ENCODE measurements at regions of chr1 and their contacts with region 1.

Region 1: GRCh38 chr1:44390277-44390676 is 14.8 kb upstream of the RNF220 start:
- DNase-seq: peak; percentile 30 to 57
- ATAC-seq: peak; percentile 82 to 86
- H3K4me3 ChIP-seq: no peak overlapping the region
- H3K27ac ChIP-seq: 0 out of 6 replicates have a peak overlapping the region, but pooled peaks of 1 of the 2 experiments have one; percentile 24
- H3K4me1 ChIP-seq: peaks cover 10% of the 10 kb centered on the region
- CTCF ChIP-seq: no peak
- EP300 ChIP-seq: no peak
- POLR2A ChIP-seq: no peak
- RAD21 ChIP-seq: no peak

Region 2: GRCh38 chr1:44377925-44378784 is 12.1 kb before region 1 on chr1:
- CTCF ChIA-PET with region 1: interaction called, 10 read pairs
- POLR2A ChIA-PET with region 1: no interaction called
- DNase-seq: peak; percentile 35 to 46
- ATAC-seq: peak; percentile 59 to 80; a peak in 5 of 6 replicates
- H3K4me3 ChIP-seq: no peak overlapping the region
- H3K27ac ChIP-seq: no peak overlapping the region
- H3K4me1 ChIP-seq: no peaks in the 10 kb centered on the region
- CTCF ChIP-seq: peak; percentile 56
- EP300 ChIP-seq: no peak
- POLR2A ChIP-seq: no peak
- RAD21 ChIP-seq: peak; percentile 64 to 80

Region 3: DNA sequence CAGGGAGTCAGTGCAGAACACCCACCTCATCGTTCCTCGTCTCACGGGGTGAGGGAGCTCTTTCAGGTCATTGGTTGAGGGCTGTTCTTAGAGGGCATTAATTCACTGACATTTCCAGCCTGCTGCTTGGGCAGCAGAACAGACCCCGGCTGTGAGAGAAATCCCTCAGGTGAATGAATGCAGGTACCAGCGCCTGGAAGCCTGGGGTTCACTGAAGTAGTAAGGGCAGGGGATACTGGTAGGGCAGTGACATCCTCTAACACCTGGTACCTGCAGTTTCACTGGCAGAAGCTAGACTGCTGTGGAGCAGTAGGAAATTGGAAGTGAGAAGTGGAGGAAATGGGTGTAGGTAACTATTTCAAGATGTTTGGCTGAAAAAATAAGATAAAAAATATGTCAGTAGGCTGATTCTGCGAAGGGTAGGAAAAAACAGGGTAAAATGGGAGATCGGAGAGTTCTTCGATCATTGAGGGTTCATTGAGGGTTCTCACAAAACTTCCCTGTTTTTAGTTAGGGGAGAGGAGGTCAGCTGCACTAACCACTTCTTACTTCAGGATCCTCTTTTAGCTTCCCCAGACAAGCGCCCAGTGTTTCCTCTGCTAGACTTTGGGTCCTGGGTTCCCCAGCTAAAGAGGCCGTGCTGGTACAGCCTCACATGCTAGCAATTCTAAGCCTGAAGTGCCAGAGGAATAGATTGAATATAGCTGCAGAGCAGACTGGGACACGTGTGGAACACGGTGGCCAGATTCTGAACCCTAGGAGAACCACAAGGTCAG is 70.0 kb after region 1 on chr1:
- CTCF ChIA-PET with region 1: no interaction called
- POLR2A ChIA-PET with region 1: no interaction called
- DNase-seq: no peak
- ATAC-seq: no peak
- H3K4me3 ChIP-seq: no peak overlapping the region
- H3K27ac ChIP-seq: no peak overlapping the region
- H3K4me1 ChIP-seq: no peaks in the 10 kb centered on the region
- CTCF ChIP-seq: no peak
- EP300 ChIP-seq: no peak
- POLR2A ChIP-seq: no peak
- RAD21 ChIP-seq: no peak

Measured in A549 (cell line).